ENCODE measurements at regions of chr17 and their contacts with region 1.

Region 1: GRCh38 chr17:29760761-29761696 is 138.3 kb upstream of the CORO6 start:
- DNase-seq: peak; percentile 94
- H3K4me3 ChIP-seq: peak overlapping the region; percentile 61 to 80 (median 73)
- H3K27ac ChIP-seq: peak overlapping the region; percentile 81 to 88 (median 84)
- H3K4me1 ChIP-seq: peaks cover 0 to 9% (median 2%) of the 10 kb centered on the region in 4 donors
- H3K27me3 ChIP-seq: no peaks in the 10 kb centered on the region
- CTCF ChIP-seq: no peak
- EP300 ChIP-seq: no peak
- POLR2A ChIP-seq: peak in 1 of 2 donors; percentile 32

Region 2: GRCh38 chr17:29645515-29646051 is 115.4 kb before region 1 on chr17:
- intact Hi-C with region 1: loop called (anchors 5 kb)
- DNase-seq: peak; percentile 93
- H3K4me3 ChIP-seq: no peak overlapping the region
- H3K27ac ChIP-seq: peak overlapping the region; percentile 64 to 82 (median 70)
- H3K4me1 ChIP-seq: peaks cover 0 to 51% (median 24%) of the 10 kb centered on the region in 4 donors
- H3K27me3 ChIP-seq: no peaks in the 10 kb centered on the region
- CTCF ChIP-seq: no peak
- EP300 ChIP-seq: peak in 1 of 4 donors; percentile 56
- POLR2A ChIP-seq: no peak

Region 3: GRCh38 chr17:29682987-29683386 is 78.0 kb before region 1 on chr17:
- intact Hi-C with region 1: no loop called
- DNase-seq: no peak
- H3K4me3 ChIP-seq: no peak overlapping the region
- H3K27ac ChIP-seq: peak overlapping the region; percentile 9 to 38 (median 27)
- H3K4me1 ChIP-seq: peaks cover 0 to 22% (median 6%) of the 10 kb centered on the region in 4 donors
- H3K27me3 ChIP-seq: no peaks in the 10 kb centered on the region
- CTCF ChIP-seq: no peak
- EP300 ChIP-seq: no peak
- POLR2A ChIP-seq: no peak

Region 4: DNA sequence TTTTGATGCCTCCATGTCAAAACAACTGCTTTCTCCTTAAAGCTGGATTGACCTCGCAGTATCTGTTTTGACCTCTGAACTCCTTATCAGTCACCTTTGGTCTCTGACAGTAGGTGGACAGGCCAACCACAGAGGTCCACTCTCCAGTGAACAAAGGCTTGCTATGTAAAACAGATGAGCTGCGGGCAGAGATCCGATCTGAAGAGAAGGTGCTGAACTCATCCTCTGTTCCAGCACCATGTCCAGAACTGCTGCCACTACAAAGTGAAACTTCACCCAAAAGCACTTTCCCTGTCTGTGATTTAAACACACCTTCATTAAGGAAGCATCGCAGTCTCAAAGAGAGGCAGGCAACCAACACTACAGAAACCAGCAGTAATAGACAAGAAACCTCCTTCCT is 21.0 kb before region 1 on chr17:
- intact Hi-C with region 1: no loop called
- DNase-seq: no peak
- H3K4me3 ChIP-seq: no peak overlapping the region
- H3K27ac ChIP-seq: peak overlapping the region in 2 of 4 donors; percentile 21 to 39
- H3K4me1 ChIP-seq: peaks cover 0 to 16% (median 9%) of the 10 kb centered on the region in 4 donors
- H3K27me3 ChIP-seq: no peaks in the 10 kb centered on the region
- CTCF ChIP-seq: no peak
- EP300 ChIP-seq: no peak
- POLR2A ChIP-seq: no peak

Region 5: GRCh38 chr17:29948448-29949215 is 187.6 kb after region 1 on chr17:
- intact Hi-C with region 1: no loop called
- DNase-seq: no peak
- H3K4me3 ChIP-seq: no peak overlapping the region
- H3K27ac ChIP-seq: no peak overlapping the region
- H3K4me1 ChIP-seq: no peaks in the 10 kb centered on the region
- H3K27me3 ChIP-seq: no peaks in the 10 kb centered on the region
- CTCF ChIP-seq: no peak
- EP300 ChIP-seq: no peak
- POLR2A ChIP-seq: no peak